ENCODE measurements at regions of chr2 and their contacts with region 1.

Region 1: DNA sequence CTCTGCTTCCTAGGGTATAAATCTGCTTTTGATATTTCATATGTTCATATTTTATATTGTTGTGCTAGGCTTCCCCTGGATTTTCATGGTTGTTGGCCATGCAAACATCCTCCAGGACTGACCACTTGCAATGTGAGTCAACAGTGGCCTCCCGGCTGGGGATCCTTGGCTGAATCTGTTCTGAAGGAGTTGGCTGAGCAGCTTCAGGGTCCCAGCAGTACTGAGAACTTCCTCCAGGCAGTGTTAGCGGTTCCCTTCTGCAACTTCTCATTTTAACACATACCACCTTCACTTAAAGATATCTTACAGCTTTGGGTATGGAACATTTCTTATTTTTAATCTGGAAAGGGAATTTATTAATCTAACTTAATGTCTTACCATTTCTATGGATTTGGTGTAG is 122.1 kb downstream of the DTNB start:
- DNase-seq: peak in 2 of 3 donors; percentile 39 to 41
- H3K4me3 ChIP-seq: no peak overlapping the region
- H3K27ac ChIP-seq: no peak overlapping the region
- H3K4me1 ChIP-seq: peaks cover 5 to 19% (median 9%) of the 10 kb centered on the region in 4 experiments
- H3K27me3 ChIP-seq: no peaks in the 10 kb centered on the region

Region 2: GRCh38 chr2:24620936-24621335 is 930.4 kb before region 1 on chr2:
- CTCF ChIA-PET with region 1: no interaction called
- POLR2A ChIA-PET with region 1: no interaction called
- DNase-seq: no peak
- H3K4me3 ChIP-seq: no peak overlapping the region
- H3K27ac ChIP-seq: no peak overlapping the region
- H3K4me1 ChIP-seq: no peaks in the 10 kb centered on the region
- H3K27me3 ChIP-seq: no peaks in the 10 kb centered on the region

Region 3: DNA sequence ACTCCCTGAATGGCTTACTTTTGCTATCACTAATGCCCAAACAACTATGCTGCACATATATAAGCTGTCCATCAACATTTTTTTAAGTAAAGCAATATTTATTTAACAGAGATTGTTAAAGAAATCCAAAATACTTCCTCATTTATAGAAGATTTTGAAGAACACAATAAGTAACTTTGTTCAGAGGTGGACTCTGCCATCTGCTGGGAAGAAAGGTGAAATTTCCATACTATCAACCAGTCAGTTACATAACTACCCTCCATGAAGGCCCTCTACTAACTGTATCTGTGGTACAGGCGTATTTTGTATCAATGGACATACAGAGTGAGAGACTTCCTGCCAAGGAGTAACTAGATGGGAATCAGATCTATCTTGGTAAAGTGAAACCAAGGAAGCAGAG is 16.1 kb after region 1 on chr2:
- CTCF ChIA-PET with region 1: interaction called, 26 read pairs
- POLR2A ChIA-PET with region 1: no interaction called
- DNase-seq: peak; percentile 78 to 88 (median 88)
- H3K4me3 ChIP-seq: no peak overlapping the region
- H3K27ac ChIP-seq: no peak overlapping the region
- H3K4me1 ChIP-seq: peaks cover 10 to 17% (median 16%) of the 10 kb centered on the region in 4 experiments
- H3K27me3 ChIP-seq: no peaks in the 10 kb centered on the region